HepG2 (cell line): ENCODE measurements at regions of chr10 and their contacts with region 1.

Region 1: DNA sequence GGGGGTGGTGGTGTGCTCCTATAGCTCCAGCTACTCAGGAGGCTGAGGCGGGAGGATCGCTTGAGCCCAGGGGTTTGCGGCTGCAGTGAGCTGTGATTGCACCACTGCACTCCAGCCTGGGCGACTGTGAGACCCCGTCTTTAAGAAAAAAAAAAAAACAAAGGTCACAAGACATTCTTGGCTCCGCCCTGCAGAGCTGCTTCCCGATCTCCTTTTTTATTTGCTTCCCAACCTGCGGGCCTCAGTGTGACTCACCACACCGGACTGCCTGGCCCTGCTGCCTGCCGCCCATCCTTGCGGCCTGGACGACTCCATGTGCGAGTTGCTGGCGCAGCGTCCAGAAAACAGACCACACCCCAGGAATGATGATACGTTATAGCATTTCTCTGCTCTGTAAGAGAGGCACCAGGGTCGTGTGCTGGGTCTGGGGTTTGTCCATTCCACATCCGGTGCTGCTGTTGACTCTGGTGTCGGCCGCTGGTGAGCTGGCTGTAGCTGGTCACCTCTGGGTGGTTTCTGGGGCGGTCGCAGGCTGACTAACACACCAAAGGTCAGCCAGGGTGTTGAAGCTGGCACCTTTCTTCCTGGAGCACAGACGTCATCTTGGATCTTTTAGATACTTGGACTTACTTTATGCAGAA is 123.6 kb downstream of the TCF7L2 start:
- DNase-seq: peak; percentile 91
- ATAC-seq: peak; percentile 98
- H3K4me3 ChIP-seq: peak overlapping the region in 2 of 3 experiments; percentile 18 to 40; a peak in 2 of 6 replicates
- H3K27ac ChIP-seq: peak overlapping the region; percentile 46
- H3K4me1 ChIP-seq: peaks cover 32% of the 10 kb centered on the region
- H3K27me3 ChIP-seq: no peaks in the 10 kb centered on the region
- CTCF ChIP-seq: no peak
- EP300 ChIP-seq: peak in 1 of 2 experiments; percentile 64; a peak in 2 of 4 replicates
- POLR2A ChIP-seq: 0 out of 4 replicates have a peak, but pooled peaks of 1 of the 2 experiments have one; percentile 21
- RAD21 ChIP-seq: no peak

Region 2: DNA sequence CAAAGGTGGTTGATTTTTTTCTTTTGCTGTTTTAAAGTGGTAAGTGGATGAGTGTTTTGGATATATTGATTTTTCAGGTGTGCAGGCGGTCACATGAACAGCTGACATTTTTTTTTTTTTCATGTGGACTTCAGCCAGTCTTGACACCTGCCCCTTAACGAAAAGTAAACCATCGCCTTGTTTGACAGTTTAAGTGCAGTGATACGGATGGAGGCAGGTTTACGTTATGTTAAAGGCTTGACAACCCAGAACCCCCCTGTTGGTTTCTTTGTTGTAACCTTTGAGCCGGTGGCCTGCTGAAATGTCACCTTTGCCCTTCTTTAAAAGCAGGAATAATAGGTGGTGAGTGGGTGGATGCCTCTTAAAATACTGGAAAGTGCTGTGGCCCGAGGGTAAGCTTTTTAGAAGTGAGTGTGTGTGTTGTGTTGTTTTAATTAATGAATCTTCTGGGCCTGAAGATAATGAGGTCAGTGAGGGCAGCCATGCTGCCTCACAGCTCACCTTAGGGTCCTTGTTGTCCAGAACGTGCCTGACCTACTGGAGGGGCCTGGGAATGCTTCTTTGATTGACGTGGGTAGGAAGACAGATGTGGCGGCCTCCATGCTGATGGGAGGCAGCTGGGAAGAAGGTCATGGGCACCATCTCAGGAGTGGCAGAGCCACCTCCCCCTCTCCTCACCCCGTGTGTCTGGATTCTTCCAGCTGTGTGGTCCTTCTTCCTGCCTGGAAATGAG is 53.8 kb before region 1 on chr10:
- CTCF ChIA-PET with region 1: no interaction called
- POLR2A ChIA-PET with region 1: no interaction called
- in situ Hi-C with region 1: no loop called
- intact Hi-C with region 1: loop called (anchors 5 kb)
- DNase-seq: peak; percentile 81
- ATAC-seq: peak; percentile 75
- H3K4me3 ChIP-seq: peak overlapping the region in 1 of 3 experiments; percentile 17; a peak in 1 of 6 replicates
- H3K27ac ChIP-seq: peak overlapping the region; percentile 46
- H3K4me1 ChIP-seq: peaks cover 58% of the 10 kb centered on the region
- H3K27me3 ChIP-seq: no peaks in the 10 kb centered on the region
- CTCF ChIP-seq: no peak
- EP300 ChIP-seq: peak in 1 of 2 experiments; percentile 77; a peak in 2 of 4 replicates
- POLR2A ChIP-seq: no peak
- RAD21 ChIP-seq: no peak

Region 3: DNA sequence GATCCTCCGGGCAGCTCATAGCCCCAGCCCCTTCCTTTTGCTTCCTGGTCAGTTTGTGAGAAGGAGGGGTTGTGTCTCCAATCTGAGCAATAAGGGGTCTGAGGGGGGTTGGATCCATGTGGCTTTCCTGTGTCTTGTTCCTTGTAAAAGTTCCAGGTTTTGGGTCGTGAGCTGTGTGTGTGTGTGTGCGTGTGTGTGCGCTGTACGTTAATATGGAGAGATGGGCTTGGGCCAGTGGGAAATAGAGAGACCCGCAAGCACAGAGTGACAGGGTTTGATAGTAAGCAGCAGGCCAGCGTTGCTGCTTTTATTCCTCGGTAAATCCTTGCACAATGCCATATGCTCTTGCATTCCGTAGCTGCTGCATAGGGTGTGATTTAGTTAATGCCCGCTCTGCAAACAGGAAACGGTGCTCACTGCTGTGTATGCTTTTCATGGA is 15.1 kb before region 1 on chr10:
- CTCF ChIA-PET with region 1: no interaction called
- POLR2A ChIA-PET with region 1: interaction called, 14 read pairs
- in situ Hi-C with region 1: no loop called
- intact Hi-C with region 1: no loop called
- DNase-seq: peak; percentile 67
- ATAC-seq: peak; percentile 79
- H3K4me3 ChIP-seq: peak overlapping the region; percentile 18 to 51 (median 41); a peak in 5 of 6 replicates
- H3K27ac ChIP-seq: peak overlapping the region; percentile 60
- H3K4me1 ChIP-seq: peaks cover 76% of the 10 kb centered on the region
- H3K27me3 ChIP-seq: no peaks in the 10 kb centered on the region
- CTCF ChIP-seq: no peak
- EP300 ChIP-seq: no peak
- POLR2A ChIP-seq: no peak
- RAD21 ChIP-seq: no peak

Region 4: DNA sequence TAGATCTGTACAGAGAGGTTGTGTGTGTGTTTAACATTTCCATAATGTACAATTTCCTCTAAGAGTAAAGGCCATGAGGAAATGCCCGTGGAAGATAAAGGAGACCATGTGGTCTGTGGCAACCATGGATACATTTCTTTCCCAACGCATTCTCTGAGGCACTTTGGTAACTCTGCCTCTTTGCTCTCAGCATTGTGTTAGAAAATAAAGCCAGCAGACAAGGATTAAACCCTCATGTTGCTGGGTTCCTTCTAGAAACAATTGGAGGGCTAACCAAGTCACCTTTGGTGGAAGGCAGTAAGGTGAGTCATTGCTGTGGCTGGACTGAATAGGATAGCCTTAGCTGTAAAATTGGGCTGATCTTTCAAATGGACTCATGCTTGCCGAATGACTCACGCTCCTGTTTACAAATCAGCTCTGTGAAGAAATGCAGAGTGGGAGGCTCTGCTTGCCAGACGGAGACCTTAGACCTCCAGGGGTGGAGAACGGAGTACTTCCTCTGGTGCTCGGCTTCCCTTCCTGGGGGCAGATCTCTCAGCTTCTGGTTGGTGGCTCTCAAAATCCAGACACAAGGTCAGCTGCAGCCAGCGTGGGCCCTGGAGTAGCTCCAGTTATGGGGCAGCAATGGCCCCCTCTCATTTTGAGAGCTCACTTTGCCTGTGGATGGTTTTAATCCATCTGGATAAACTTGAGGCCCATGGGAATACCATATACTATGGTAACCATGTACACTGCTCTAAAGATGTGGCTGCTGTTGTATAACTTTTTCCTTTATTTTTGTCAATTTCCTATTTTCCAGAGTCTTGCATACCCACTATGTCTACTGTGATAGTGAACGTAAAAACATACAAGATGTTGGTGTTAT is 13.7 kb after region 1 on chr10:
- CTCF ChIA-PET with region 1: no interaction called
- POLR2A ChIA-PET with region 1: interaction called, 17 read pairs
- in situ Hi-C with region 1: no loop called
- intact Hi-C with region 1: no loop called
- DNase-seq: peak; percentile 96
- ATAC-seq: peak; percentile 94
- H3K4me3 ChIP-seq: no peak overlapping the region
- H3K27ac ChIP-seq: peak overlapping the region; percentile 48
- H3K4me1 ChIP-seq: peaks cover 64% of the 10 kb centered on the region
- H3K27me3 ChIP-seq: no peaks in the 10 kb centered on the region
- CTCF ChIP-seq: no peak
- EP300 ChIP-seq: peak in 1 of 2 experiments; percentile 89; a peak in 2 of 4 replicates
- POLR2A ChIP-seq: no peak
- RAD21 ChIP-seq: no peak

Region 5: DNA sequence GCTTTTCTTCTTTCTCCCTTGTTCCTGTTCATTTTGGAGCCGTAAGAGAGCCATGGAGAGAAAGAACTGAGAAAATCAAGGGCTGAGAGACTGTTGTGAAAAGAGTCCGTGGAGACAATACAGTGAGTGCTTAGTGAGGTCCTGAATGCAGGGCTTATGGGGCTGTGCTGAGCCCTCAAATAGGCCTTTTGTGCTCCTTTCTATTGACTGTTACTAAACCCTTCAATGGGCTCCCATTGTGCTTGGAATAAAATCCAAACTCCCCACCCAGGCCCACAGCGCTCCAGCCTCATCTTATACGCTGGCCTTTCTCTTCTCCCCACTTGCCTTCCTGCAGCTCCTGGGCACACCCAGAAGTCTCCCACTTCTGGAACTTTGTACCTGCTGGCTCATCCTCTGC is 236.1 kb after region 1 on chr10:
- CTCF ChIA-PET with region 1: no interaction called
- POLR2A ChIA-PET with region 1: no interaction called
- in situ Hi-C with region 1: no loop called
- intact Hi-C with region 1: no loop called
- DNase-seq: no peak
- ATAC-seq: no peak
- H3K4me3 ChIP-seq: no peak overlapping the region
- H3K27ac ChIP-seq: no peak overlapping the region
- H3K4me1 ChIP-seq: peaks cover 3% of the 10 kb centered on the region
- H3K27me3 ChIP-seq: no peaks in the 10 kb centered on the region; a peak in 1 of 5 replicates
- CTCF ChIP-seq: no peak
- EP300 ChIP-seq: no peak
- POLR2A ChIP-seq: no peak
- RAD21 ChIP-seq: no peak